ENCODE measurements at regions of chr9 and their contacts with region 1.

Region 1: GRCh38 chr9:22158927-22159346 is 149.8 kb upstream of the CDKN2B start:
- DNase-seq: peak; percentile 87
- ATAC-seq: peak; percentile 91
- H3K4me3 ChIP-seq: peak overlapping the region; percentile 13; the same call in 1 of the 2 replicates
- H3K27ac ChIP-seq: peak overlapping the region; percentile 94
- H3K4me1 ChIP-seq: peaks cover 36% of the 10 kb centered on the region
- H3K27me3 ChIP-seq: no peaks in the 10 kb centered on the region
- CTCF ChIP-seq: no peak

Region 2: DNA sequence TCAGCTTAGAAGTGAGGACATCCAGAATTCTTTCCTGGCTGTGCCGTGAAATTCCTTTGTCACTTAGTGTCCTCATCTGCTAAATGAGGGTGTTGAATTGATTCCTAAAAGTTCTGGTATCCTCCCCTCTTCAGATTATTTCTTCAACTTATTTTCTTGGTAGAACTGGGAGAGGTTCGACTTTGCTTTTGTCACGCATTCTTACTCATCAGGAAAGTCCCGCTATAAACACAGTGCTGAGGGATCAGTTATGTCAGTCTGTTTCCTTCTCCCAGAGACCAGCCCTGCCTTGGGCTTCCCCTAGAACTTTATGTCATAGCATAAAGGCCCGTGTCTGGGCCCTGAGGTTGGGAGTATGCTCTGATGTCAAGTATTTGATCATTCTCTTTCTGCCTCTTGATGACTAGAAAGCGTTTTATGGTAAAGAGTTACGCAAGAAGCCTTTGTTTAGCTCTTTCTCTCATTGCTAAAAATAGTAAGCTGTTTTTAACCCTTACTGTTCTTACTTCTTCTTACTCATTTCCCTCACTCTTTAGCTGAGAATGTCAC is 326.9 kb before region 1 on chr9:
- CTCF ChIA-PET with region 1: no interaction called
- POLR2A ChIA-PET with region 1: no interaction called
- intact Hi-C with region 1: loop called (anchors 10 kb)
- DNase-seq: peak; percentile 59
- ATAC-seq: peak; percentile 12
- H3K4me3 ChIP-seq: no peak overlapping the region
- H3K27ac ChIP-seq: peak overlapping the region; percentile 100
- H3K4me1 ChIP-seq: peaks cover 65% of the 10 kb centered on the region
- H3K27me3 ChIP-seq: no peaks in the 10 kb centered on the region
- CTCF ChIP-seq: no peak

Region 3: DNA sequence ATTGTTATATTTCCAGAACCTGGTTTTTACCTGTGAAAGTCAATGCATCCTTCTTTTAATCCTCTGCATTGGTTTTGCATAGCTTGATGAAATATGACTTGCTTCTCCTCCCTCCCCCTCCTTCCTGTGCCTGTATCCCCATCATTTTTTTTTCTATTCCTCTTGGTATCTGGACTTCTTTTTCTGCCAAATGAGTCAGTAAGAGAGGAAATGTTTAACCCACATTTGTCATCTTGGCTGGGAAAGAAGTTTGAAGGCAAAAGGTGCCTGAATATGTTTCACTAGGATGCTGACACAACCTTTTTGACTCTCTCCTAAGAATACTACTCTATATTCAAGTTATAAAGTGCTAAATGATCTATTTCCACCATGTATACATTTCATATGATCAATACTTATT is 114.4 kb before region 1 on chr9:
- CTCF ChIA-PET with region 1: no interaction called
- POLR2A ChIA-PET with region 1: no interaction called
- intact Hi-C with region 1: loop called (anchors 2 kb)
- DNase-seq: peak; percentile 82
- ATAC-seq: peak; percentile 39
- H3K4me3 ChIP-seq: no peak overlapping the region
- H3K27ac ChIP-seq: peak overlapping the region; percentile 62
- H3K4me1 ChIP-seq: peaks cover 62% of the 10 kb centered on the region
- H3K27me3 ChIP-seq: no peaks in the 10 kb centered on the region
- CTCF ChIP-seq: no peak

Region 4: DNA sequence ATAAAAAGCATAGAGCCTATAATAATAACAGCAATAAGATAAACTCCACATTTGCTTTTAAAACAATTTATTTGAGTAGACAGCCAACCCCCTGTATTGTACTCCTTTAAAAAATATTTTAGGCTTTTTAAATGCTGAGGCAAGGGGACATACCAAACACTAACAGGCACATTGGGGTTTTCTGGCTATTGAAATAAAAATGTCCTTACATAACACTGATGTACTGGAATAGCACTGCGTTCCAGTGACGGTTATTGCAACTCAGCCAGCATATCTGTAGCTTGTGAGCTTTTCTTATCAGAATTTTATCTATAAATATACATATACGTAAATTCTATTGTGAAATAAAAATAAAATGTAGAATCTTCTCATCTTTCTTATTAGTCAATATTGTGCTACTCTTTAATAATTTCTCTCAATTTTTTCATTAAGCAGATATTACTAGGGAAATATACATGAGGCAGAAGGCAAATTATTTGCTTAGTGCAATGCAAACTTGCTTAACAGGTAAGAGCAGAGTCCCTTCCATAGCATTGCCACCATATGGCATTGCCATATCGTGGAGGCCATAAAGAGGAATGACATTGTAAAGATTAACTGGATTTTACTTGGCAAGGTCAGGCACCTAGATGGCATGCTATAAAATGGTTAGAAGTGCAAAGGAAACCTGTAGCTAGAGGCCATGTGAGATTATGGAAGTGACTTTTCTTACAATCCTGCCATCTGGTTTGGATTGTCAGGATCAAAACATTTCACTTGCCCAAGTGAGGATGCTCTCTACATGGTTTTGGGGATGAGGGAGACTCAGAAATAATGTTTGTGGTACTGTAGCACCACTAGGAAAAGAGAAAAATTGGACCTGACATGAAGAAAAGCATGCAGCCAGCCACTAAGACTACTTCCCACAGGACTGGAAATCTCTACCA is 55.0 kb before region 1 on chr9:
- CTCF ChIA-PET with region 1: no interaction called
- POLR2A ChIA-PET with region 1: interaction called, 11 read pairs
- intact Hi-C with region 1: no loop called
- DNase-seq: peak; percentile 57
- ATAC-seq: peak; percentile 29
- H3K4me3 ChIP-seq: no peak overlapping the region
- H3K27ac ChIP-seq: peak overlapping the region; percentile 95
- H3K4me1 ChIP-seq: peaks cover 37% of the 10 kb centered on the region
- H3K27me3 ChIP-seq: no peaks in the 10 kb centered on the region
- CTCF ChIP-seq: no peak

Region 5: DNA sequence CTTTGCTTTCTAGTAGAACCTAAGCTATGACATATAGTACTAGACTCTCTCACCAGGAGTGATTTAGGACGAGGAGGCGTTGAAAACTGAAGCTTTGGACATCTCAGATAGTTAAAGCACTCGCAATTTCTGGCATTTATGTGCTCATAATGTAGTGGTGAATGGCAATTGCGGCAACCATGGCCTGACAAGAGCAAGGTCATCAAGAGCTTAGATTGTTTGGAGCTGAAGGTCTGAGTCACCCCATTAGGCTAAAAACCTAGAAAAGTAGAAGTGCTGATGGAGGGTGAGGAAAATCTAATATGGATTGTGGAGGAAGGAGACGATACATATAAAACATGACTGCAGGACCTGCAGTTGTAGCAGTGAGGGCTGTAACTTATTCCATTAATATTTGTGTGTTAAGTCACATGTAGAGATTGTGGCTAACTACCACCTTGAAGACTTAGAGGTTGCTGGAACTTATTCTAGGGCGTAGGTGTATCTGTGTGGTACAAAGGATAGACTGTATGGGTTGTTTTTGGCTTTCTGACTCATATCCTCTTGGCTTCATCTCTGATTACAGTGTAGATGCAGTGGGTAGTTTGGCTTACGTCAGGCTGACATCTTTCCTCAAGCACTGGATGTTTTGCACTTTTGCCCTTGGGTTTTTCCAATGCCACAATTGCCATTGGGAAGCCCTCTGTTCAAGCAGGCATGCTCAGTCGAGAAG is 11.0 kb before region 1 on chr9:
- CTCF ChIA-PET with region 1: no interaction called
- POLR2A ChIA-PET with region 1: no interaction called
- intact Hi-C with region 1: loop called (anchors 2 kb)
- DNase-seq: peak; percentile 77
- ATAC-seq: peak; percentile 93
- H3K4me3 ChIP-seq: no peak overlapping the region
- H3K27ac ChIP-seq: peak overlapping the region; percentile 91
- H3K4me1 ChIP-seq: peaks cover 42% of the 10 kb centered on the region
- H3K27me3 ChIP-seq: no peaks in the 10 kb centered on the region
- CTCF ChIP-seq: no peak

Region 6: GRCh38 chr9:22211593-22212360 is 52.8 kb after region 1 on chr9:
- CTCF ChIA-PET with region 1: no interaction called
- POLR2A ChIA-PET with region 1: interaction called, 3 read pairs
- intact Hi-C with region 1: loop called (anchors 1 kb)
- DNase-seq: peak; percentile 96
- ATAC-seq: peak; percentile 76
- H3K4me3 ChIP-seq: 0 out of 2 replicates have a peak overlapping the region, but pooled peaks have one; percentile 2
- H3K27ac ChIP-seq: peak overlapping the region; percentile 99
- H3K4me1 ChIP-seq: peaks cover 80% of the 10 kb centered on the region
- H3K27me3 ChIP-seq: no peaks in the 10 kb centered on the region
- CTCF ChIP-seq: no peak

Region 7: GRCh38 chr9:22244141-22245011 is 85.4 kb after region 1 on chr9:
- CTCF ChIA-PET with region 1: interaction called, 13 read pairs
- POLR2A ChIA-PET with region 1: interaction called, 7 read pairs
- intact Hi-C with region 1: no loop called
- DNase-seq: peak; percentile 73
- ATAC-seq: peak; percentile 82
- H3K4me3 ChIP-seq: no peak overlapping the region; the same call in 1 of the 2 replicates
- H3K27ac ChIP-seq: peak overlapping the region; percentile 21
- H3K4me1 ChIP-seq: peaks cover 24% of the 10 kb centered on the region
- H3K27me3 ChIP-seq: no peaks in the 10 kb centered on the region
- CTCF ChIP-seq: peak; percentile 71

Region 8: DNA sequence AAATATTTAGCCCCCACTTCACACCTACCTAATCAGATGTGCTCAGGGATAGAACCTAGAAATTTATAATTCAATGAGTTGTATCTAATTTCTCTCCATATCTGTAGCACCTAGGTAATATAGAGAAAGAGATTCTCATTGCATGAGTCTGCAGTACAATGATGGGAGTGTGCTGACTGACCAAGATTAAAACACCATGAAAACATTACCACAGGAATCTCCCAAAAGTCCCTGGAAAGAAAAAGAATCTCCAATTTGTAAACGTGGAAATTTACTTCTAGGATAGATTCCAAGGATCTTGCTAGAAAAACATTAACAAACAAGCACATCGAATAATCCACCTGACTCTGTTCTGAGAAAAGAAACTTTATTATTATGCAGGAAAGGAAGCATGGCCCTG is 242.7 kb after region 1 on chr9:
- CTCF ChIA-PET with region 1: no interaction called
- POLR2A ChIA-PET with region 1: no interaction called
- intact Hi-C with region 1: no loop called
- DNase-seq: no peak
- ATAC-seq: no peak
- H3K4me3 ChIP-seq: no peak overlapping the region
- H3K27ac ChIP-seq: no peak overlapping the region
- H3K4me1 ChIP-seq: no peaks in the 10 kb centered on the region
- H3K27me3 ChIP-seq: no peaks in the 10 kb centered on the region
- CTCF ChIP-seq: no peak

Measured in PC-3 (cell line).